ENCODE measurements at regions of chr5 and their contacts with region 1.

Region 1: GRCh38 chr5:81301271-81302015 is at the start of gene ZCCHC9:
- DNase-seq: peak; percentile 92
- H3K4me3 Mint-ChIP-seq: peak within 1 kb of the TSS; percentile 87
- H3K27ac Mint-ChIP-seq: peak within 1 kb of the TSS; percentile 90
- H3K4me1 Mint-ChIP-seq: peaks cover 56% of the 10 kb centered on the region
- H3K27me3 Mint-ChIP-seq: no peaks in the 10 kb centered on the region
- CTCF ChIP-seq: no peak
- total RNA-seq, gene ZCCHC9: 34.9 and 36.1 TPM in 2 replicates

Region 2: GRCh38 chr5:80686757-80687156 is 614.7 kb before region 1 on chr5:
- CTCF ChIA-PET with region 1: no interaction called
- intact Hi-C with region 1: loop called (anchors 10 kb)
- DNase-seq: no peak
- H3K4me3 Mint-ChIP-seq: no peak overlapping the region
- H3K27ac Mint-ChIP-seq: no peak overlapping the region
- H3K4me1 Mint-ChIP-seq: no peaks in the 10 kb centered on the region
- H3K27me3 Mint-ChIP-seq: no peaks in the 10 kb centered on the region
- CTCF ChIP-seq: peak; percentile 20

Region 3: GRCh38 chr5:81212211-81212751 is 89.2 kb before region 1 on chr5:
- CTCF ChIA-PET with region 1: no interaction called
- intact Hi-C with region 1: loop called (anchors 5 kb)
- DNase-seq: peak; percentile 82
- H3K4me3 Mint-ChIP-seq: peak overlapping the region; percentile 52
- H3K27ac Mint-ChIP-seq: peak overlapping the region; percentile 78
- H3K4me1 Mint-ChIP-seq: peaks cover 52% of the 10 kb centered on the region
- H3K27me3 Mint-ChIP-seq: no peaks in the 10 kb centered on the region
- CTCF ChIP-seq: no peak

Region 4: DNA sequence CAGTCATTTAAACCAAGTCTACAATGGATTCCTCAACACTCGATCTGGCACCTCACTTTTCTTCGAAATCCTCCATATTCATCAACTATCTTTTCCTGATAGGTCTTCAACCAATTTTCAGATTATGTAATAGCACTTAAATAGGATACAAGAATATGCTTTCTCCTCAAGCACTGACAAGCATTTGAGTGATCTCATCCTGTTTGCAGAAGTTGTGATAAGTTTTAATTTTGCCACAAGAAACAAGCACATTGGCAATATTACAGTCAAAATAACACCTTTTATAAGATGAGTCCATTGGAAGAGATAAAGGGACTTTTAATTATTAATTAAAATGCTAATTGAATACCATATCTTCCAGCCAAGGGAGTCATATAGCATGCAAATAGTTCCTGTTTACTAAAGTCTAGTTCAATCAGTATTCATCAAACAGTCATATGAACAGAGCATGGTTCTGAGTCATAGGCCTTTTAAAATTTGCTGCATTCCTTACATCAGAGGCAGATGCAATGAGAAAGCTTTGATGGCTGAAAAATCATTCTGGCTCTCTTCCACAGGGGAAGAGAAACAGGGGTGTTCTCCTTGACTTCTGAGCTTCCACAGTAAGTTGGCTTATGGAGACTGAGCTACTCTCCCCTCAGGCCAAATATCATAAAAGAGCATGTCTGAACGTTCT is 32.8 kb before region 1 on chr5:
- CTCF ChIA-PET with region 1: interaction called, 5 read pairs
- intact Hi-C with region 1: loop called (anchors 2 kb)
- DNase-seq: no peak
- H3K4me3 Mint-ChIP-seq: no peak overlapping the region
- H3K27ac Mint-ChIP-seq: peak overlapping the region; percentile 5
- H3K4me1 Mint-ChIP-seq: peaks cover 33% of the 10 kb centered on the region
- H3K27me3 Mint-ChIP-seq: no peaks in the 10 kb centered on the region
- CTCF ChIP-seq: no peak

Region 5: DNA sequence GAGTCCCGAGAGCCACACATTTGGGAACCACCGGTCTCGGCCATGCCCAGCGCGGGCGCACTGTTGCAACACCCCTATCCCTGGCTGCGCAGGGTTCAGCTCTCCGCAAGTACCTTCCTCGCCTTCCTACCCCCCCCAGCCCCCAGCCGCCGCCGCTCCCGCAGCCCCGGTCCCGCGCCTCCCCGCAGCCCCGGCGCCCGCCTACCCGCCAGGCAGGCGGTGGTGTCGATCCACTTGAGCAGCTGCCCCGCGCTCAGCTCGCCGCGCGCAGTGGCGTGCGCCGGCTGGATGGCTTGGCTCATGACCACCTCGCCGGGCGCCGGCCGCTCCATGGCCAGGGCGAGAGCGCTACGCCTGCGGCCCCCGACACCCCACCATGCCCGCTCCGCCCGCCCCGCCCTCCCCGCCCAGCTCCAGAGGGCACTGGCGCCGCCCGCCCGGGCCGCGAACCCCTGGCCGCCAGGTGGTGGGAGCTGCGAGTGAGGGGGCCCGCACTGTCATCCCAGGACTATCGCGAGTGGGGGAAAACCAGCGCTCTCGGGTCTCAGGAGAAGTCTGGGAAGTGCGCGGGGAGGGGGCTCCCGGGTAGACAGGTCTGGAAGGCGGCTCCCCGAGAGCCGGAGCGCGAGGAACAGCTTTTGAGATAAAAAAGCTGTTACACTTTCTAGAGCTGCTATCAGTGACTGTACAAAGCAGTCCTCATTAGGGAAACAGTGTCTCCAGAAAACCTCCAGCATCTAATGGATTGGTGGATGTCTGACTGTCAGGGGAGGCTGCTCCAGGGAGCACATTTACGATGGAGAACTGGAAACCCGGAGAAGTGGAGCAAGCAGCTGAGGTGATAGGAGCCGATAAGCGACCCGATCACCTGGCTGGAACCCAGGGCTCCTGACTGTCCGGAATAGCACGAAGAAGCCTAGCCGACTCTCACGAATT is 92.6 kb after region 1 on chr5 and contains the start of gene ACOT12:
- CTCF ChIA-PET with region 1: interaction called, 3 read pairs
- intact Hi-C with region 1: loop called (anchors 10 kb)
- DNase-seq: peak; percentile 31
- H3K4me3 Mint-ChIP-seq: peak within 1 kb of the TSS; percentile 74
- H3K27ac Mint-ChIP-seq: no peak within 1 kb of the TSS
- H3K4me1 Mint-ChIP-seq: no peaks in the 10 kb centered on the region
- H3K27me3 Mint-ChIP-seq: no peaks in the 10 kb centered on the region
- CTCF ChIP-seq: no peak
- total RNA-seq, gene ACOT12: 0.87 TPM in 1 of 2 replicates, not detected in the other

Region 6: GRCh38 chr5:81420039-81420667 is 118.7 kb after region 1 on chr5:
- CTCF ChIA-PET with region 1: interaction called, 3 read pairs
- intact Hi-C with region 1: loop called (anchors 5 kb)
- DNase-seq: peak; percentile 58
- H3K4me3 Mint-ChIP-seq: peak overlapping the region; percentile 28
- H3K27ac Mint-ChIP-seq: peak overlapping the region; percentile 99
- H3K4me1 Mint-ChIP-seq: peaks cover 56% of the 10 kb centered on the region
- H3K27me3 Mint-ChIP-seq: no peaks in the 10 kb centered on the region
- CTCF ChIP-seq: no peak

Measured in Calu3 (cell line).